Activated T-helper 2 cell treated with anti-CD3 and anti-CD28 coated beads, Interferon-gamma antibody, Interleukin-2, Interleukin-4, amounts not matched to agents 10 μg/mL and 5 μg/mL and 100 μg/mL, durations not matched to agents 14 hours and 24 hours and 36 hours (primary cell): ENCODE measurements at regions of chr5 and their contacts with region 1.

Region 1: GRCh38 chr5:119411935-119412602 is 40.2 kb upstream of the HSD17B4 start:
- DNase-seq: peak; percentile 38
- H3K4me3 Mint-ChIP-seq: peak overlapping the region; percentile 83
- H3K27ac Mint-ChIP-seq: peak overlapping the region; percentile 42
- H3K4me1 Mint-ChIP-seq: peaks cover 36% of the 10 kb centered on the region
- H3K27me3 Mint-ChIP-seq: peaks cover 9% of the 10 kb centered on the region

Region 2: GRCh38 chr5:119022017-119022745 is 389.9 kb before region 1 on chr5:
- intact Hi-C with region 1: loop called (anchors 1 kb)
- DNase-seq: no peak
- H3K4me3 Mint-ChIP-seq: no peak overlapping the region
- H3K27ac Mint-ChIP-seq: no peak overlapping the region
- H3K4me1 Mint-ChIP-seq: no peaks in the 10 kb centered on the region
- H3K27me3 Mint-ChIP-seq: no peaks in the 10 kb centered on the region

Region 3: DNA sequence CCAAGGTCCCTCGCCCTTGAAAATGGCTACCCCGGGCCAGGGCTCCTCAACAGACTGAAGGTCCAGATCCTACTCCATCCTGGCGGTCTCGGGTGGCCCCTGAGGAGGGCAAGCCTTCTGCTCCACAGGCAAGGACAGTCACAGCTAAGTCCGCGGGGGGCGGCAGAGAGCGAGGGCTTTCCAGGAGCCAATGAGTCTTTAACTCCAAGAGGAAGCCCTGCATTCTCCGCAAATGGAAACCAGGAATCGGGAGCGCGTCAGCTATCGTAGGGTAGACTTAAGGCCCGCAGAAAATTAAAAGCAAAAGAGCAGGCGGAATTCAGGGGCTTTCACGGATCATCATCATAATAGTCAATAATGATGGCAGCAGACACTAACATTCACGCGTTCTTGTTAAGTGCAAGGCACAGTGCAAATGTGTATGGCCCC is 144.1 kb before region 1 on chr5:
- intact Hi-C with region 1: loop called (anchors 1 kb)
- DNase-seq: peak; percentile 70
- H3K4me3 Mint-ChIP-seq: peak overlapping the region; percentile 99
- H3K27ac Mint-ChIP-seq: peak overlapping the region; percentile 95
- H3K4me1 Mint-ChIP-seq: peaks cover 51% of the 10 kb centered on the region
- H3K27me3 Mint-ChIP-seq: no peaks in the 10 kb centered on the region

Region 4: GRCh38 chr5:119315516-119315949 is 96.5 kb before region 1 on chr5:
- intact Hi-C with region 1: loop called (anchors 1 kb)
- DNase-seq: no peak
- H3K4me3 Mint-ChIP-seq: no peak overlapping the region
- H3K27ac Mint-ChIP-seq: peak overlapping the region; percentile 77
- H3K4me1 Mint-ChIP-seq: peaks cover 84% of the 10 kb centered on the region
- H3K27me3 Mint-ChIP-seq: no peaks in the 10 kb centered on the region